B cell (primary cell): ENCODE measurements at regions of chr7 and their contacts with region 1.

Region 1: DNA sequence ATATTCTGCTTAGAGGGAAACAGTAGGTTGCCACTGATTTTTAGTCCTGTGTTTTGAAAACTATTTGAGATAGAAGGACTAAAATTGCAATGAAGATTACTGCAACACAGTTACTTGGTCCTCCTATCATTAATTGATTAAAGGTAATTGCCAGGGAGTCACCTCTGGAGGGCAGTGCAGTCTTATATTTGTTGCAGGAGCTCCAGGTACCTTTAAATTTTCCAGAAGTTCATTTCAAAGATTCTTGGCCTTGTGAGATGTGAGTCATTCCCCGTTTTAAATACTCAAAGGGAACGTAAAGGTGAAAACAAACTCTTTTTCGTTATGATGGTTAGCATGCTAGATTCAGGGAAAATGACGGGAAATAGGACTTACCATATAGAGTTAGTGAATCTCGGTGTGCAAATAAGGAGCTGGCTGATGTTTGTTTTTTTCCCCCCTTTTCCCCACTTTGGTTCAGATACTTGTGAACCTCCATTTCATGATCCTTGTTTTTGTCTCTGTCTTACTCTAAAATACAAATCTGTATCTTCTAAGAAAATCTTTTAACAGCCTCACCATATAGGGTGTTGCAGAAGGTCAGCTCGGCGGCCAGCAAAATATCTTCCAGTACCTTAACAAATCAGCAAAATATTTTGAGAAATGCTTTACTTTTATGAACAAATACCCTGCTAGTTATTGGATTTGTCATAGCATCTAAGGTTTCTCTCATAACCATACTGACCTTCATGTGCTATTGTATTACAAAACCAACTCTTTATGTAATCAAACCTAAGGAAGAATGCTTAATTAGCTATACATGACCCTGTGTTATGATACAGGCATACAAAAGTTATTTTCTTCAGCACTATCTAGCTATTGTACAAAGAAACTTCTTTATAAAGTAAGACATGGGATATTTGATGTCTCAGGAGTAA is 143.0 kb upstream of the HDAC9 start:
- DNase-seq: peak; percentile 70
- ATAC-seq: peak; percentile 52
- H3K4me3 ChIP-seq: no peak overlapping the region
- H3K4me3 Mint-ChIP-seq: no peak overlapping the region
- H3K27ac ChIP-seq: no peak overlapping the region
- H3K27ac Mint-ChIP-seq: no peak overlapping the region
- H3K4me1 ChIP-seq: peaks cover 11 to 12% of the 10 kb centered on the region in 2 donors
- H3K4me1 Mint-ChIP-seq: peaks cover 25% of the 10 kb centered on the region
- H3K27me3 ChIP-seq: no peaks in the 10 kb centered on the region
- H3K27me3 Mint-ChIP-seq: no peaks in the 10 kb centered on the region
- CTCF ChIP-seq: peak; percentile 80

Region 2: DNA sequence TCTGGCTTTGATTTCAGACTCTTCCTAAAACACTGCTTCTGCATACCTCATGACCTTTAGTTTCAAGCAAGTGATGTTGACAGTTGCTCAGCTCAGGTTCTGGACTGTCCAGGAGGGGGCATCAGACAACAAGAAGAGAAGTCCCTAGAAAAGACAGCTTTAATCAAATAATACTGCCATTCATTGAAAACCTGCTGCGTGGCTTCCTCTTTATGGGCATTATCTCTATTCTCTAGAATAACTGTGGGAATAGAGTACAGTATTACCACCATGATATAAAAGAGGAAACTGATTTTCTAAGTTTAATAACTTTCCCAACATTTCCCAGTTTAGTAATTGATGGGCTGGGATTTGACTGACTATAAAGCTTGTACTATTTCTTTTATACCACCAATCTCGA is 582.7 kb before region 1 on chr7:
- CTCF ChIA-PET with region 1: interaction called, 18 read pairs
- POLR2A ChIA-PET with region 1: no interaction called
- intact Hi-C with region 1: no loop called
- DNase-seq: peak; percentile 54
- ATAC-seq: peak; percentile 33
- H3K4me3 ChIP-seq: no peak overlapping the region
- H3K4me3 Mint-ChIP-seq: no peak overlapping the region
- H3K27ac ChIP-seq: no peak overlapping the region
- H3K27ac Mint-ChIP-seq: no peak overlapping the region
- H3K4me1 ChIP-seq: peaks cover 0 to 13% of the 10 kb centered on the region in 2 donors
- H3K4me1 Mint-ChIP-seq: peaks cover 8% of the 10 kb centered on the region
- H3K27me3 ChIP-seq: no peaks in the 10 kb centered on the region
- H3K27me3 Mint-ChIP-seq: no peaks in the 10 kb centered on the region
- CTCF ChIP-seq: peak; percentile 61

Region 3: DNA sequence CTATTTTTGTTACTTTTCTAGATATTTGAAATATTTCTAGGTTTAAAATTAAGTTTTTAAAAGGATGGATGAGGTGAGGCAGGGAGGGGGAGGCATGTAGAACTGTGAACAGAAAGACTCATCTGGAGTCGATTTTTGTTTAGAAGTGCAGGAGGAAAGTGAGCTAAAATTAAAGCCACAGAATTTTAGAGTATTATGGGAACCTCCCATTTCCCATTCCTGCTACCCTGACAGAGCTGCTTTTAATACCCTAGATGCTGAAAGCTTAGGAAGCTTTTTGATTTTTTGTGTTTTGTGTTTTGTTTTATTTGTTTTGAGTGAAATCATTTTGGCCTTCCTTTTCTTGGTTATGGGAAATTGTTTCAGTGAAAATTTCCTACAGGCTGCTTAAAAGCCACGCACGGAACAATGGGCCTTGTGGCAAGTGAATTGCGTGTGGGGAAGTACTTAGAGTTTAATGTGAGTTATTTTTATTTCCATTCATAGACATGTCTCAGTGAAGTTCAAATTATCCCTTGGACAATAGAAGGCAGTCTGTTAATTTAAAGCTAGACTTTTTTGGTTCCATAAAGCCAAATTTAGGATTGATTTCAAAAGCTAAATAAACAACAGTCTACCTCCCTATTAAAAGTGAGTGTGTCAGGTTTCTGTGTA is 41.0 kb after region 1 on chr7:
- CTCF ChIA-PET with region 1: interaction called, 5 read pairs
- POLR2A ChIA-PET with region 1: no interaction called
- intact Hi-C with region 1: loop called (anchors 5 kb)
- DNase-seq: no peak
- ATAC-seq: no peak
- H3K4me3 ChIP-seq: no peak overlapping the region
- H3K4me3 Mint-ChIP-seq: no peak overlapping the region
- H3K27ac ChIP-seq: no peak overlapping the region
- H3K27ac Mint-ChIP-seq: no peak overlapping the region
- H3K4me1 ChIP-seq: peaks cover 32% of the 10 kb centered on the region in 2 donors
- H3K4me1 Mint-ChIP-seq: peaks cover 43% of the 10 kb centered on the region
- H3K27me3 ChIP-seq: no peaks in the 10 kb centered on the region
- H3K27me3 Mint-ChIP-seq: no peaks in the 10 kb centered on the region
- CTCF ChIP-seq: no peak

Region 4: GRCh38 chr7:18570890-18571478 is 218.4 kb after region 1 on chr7:
- CTCF ChIA-PET with region 1: interaction called, 39 read pairs
- POLR2A ChIA-PET with region 1: no interaction called
- intact Hi-C with region 1: loop called (anchors 2 kb)
- DNase-seq: no peak
- ATAC-seq: no peak
- H3K4me3 ChIP-seq: no peak overlapping the region
- H3K4me3 Mint-ChIP-seq: no peak overlapping the region
- H3K27ac ChIP-seq: peak overlapping the region in 1 of 2 donors; percentile 44
- H3K27ac Mint-ChIP-seq: peak overlapping the region; percentile 20
- H3K4me1 ChIP-seq: peaks cover 45 to 56% of the 10 kb centered on the region in 2 donors
- H3K4me1 Mint-ChIP-seq: peaks cover 62% of the 10 kb centered on the region
- H3K27me3 ChIP-seq: no peaks in the 10 kb centered on the region
- H3K27me3 Mint-ChIP-seq: no peaks in the 10 kb centered on the region
- CTCF ChIP-seq: no peak

Region 5: DNA sequence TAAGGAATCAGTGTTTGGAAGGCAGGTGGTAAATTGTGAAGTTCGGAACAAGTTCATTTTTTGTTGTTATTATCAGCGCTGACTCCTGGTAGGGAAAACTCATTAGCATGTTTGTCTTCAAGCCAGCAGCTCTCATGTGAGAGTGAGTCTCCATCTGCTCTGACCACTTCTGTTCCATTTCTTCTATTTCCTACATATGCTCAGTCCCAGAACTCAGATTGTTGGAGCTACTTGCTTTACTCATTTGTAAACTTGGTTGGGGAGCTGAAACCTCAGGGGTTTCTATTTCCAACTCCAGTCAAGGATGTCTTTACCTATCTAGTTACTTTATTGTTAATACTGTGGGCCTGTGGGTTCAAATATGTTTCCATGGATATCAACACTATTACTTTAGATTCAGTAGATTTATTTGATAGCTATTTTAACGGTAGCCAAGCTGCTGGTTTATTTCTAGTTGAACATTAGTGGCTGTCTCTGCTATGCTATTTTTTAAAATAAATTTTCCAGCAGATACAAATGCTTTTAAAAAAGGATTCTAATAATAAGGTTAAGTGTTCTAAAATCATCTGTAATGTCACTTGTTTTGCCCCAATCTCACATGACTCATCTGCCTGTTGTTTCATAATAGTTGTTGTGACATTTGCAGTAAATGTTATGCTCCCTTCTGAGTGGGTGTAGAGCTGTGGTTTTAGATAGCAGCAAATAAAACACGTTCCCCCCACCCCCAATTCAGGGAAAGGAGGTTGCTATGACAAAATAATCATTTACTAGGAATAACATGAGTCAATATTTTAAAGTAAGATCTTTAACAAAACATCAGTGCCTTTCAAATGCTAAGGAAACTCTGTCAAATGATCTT is 286.2 kb after region 1 on chr7:
- CTCF ChIA-PET with region 1: interaction called, 11 read pairs
- POLR2A ChIA-PET with region 1: no interaction called
- intact Hi-C with region 1: no loop called
- DNase-seq: no peak
- ATAC-seq: no peak
- H3K4me3 ChIP-seq: no peak overlapping the region
- H3K4me3 Mint-ChIP-seq: no peak overlapping the region
- H3K27ac ChIP-seq: no peak overlapping the region
- H3K27ac Mint-ChIP-seq: no peak overlapping the region
- H3K4me1 ChIP-seq: no peaks in the 10 kb centered on the region
- H3K4me1 Mint-ChIP-seq: no peaks in the 10 kb centered on the region
- H3K27me3 ChIP-seq: no peaks in the 10 kb centered on the region
- H3K27me3 Mint-ChIP-seq: no peaks in the 10 kb centered on the region
- CTCF ChIP-seq: no peak

Region 6: GRCh38 chr7:18815261-18815960 is 462.8 kb after region 1 on chr7:
- CTCF ChIA-PET with region 1: no interaction called
- POLR2A ChIA-PET with region 1: no interaction called
- intact Hi-C with region 1: no loop called
- DNase-seq: no peak
- ATAC-seq: no peak
- H3K4me3 ChIP-seq: no peak overlapping the region
- H3K4me3 Mint-ChIP-seq: no peak overlapping the region
- H3K27ac ChIP-seq: no peak overlapping the region
- H3K27ac Mint-ChIP-seq: no peak overlapping the region
- H3K4me1 ChIP-seq: no peaks in the 10 kb centered on the region
- H3K4me1 Mint-ChIP-seq: no peaks in the 10 kb centered on the region
- H3K27me3 ChIP-seq: no peaks in the 10 kb centered on the region
- H3K27me3 Mint-ChIP-seq: no peaks in the 10 kb centered on the region
- CTCF ChIP-seq: no peak

Region 7: DNA sequence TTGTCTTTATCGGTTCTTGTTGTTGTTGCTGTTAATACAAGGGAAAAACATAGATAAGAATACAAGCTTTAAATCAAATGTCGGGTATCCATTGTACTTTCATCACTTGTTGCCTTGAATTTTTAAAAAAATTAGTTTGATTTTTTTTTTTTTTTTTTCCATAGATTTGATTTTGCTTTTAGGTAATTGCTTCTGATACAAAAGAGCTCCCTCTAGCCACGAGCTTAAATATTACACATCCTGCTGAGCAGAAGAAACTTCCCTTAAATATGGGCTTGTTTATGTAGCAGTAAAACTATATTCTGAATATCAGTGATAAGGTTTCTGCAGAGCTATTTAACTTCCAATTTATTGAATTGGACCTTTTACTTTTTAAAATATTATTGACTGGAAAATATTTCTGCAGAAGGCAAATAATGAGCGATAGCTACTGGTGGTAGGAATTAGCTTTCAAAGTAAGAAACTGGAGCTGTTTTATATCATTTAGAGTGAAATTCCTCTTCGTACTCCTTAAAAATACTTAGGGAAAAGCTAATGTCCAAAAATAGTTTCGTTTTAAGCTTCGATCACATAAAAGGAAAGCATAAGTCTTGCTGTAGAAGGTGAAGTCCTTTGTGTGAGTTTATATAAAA is 1139.3 kb after region 1 on chr7:
- CTCF ChIA-PET with region 1: interaction called, 13 read pairs
- POLR2A ChIA-PET with region 1: no interaction called
- intact Hi-C with region 1: loop called (anchors 5 kb)
- DNase-seq: peak; percentile 8
- ATAC-seq: no peak
- H3K4me3 ChIP-seq: no peak overlapping the region
- H3K4me3 Mint-ChIP-seq: no peak overlapping the region
- H3K27ac ChIP-seq: no peak overlapping the region
- H3K27ac Mint-ChIP-seq: no peak overlapping the region
- H3K4me1 ChIP-seq: no peaks in the 10 kb centered on the region
- H3K4me1 Mint-ChIP-seq: no peaks in the 10 kb centered on the region
- H3K27me3 ChIP-seq: no peaks in the 10 kb centered on the region
- H3K27me3 Mint-ChIP-seq: no peaks in the 10 kb centered on the region
- CTCF ChIP-seq: peak; percentile 63